ENCODE measurements at regions of chr5 and their contacts with region 1.

Region 1: DNA sequence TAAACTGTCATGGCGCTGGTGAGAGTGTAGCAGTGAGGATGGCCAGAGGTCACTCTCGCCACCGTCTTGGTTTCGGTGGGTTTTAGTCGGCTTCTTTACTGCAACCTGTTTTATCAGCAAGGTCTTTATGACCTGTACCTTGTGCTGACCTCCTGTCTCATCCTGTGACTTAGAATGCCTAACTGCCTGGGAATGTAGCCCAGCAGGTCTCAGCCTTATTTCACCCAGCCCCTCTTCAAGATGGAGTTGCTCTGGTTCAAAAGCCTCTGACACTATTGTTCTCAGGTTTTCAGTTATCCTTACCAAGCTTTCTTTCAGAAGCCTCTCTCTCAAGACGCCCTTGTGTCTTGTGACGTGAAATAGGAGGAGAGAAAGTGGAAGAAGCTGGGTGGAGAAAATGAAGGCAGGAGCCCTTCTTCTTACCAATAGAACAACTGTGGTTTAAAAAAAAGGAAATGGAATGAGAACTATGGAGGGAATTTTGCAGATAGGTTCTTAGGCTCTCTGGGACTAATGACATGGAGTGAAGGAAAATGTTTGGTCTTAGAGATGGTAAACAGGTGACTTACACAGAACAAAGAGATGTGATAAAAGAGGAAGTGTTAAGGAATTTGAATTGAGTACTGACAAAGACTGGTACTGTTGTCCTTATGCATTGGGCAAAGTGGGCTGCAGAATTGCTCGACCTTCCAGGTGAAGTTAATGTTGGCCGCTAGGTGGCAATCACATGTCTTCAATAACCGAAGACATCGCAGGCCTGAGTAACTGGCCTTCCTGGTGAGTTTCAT is 133.3 kb upstream of the RAI14 start:
- DNase-seq: no peak

Region 2: DNA sequence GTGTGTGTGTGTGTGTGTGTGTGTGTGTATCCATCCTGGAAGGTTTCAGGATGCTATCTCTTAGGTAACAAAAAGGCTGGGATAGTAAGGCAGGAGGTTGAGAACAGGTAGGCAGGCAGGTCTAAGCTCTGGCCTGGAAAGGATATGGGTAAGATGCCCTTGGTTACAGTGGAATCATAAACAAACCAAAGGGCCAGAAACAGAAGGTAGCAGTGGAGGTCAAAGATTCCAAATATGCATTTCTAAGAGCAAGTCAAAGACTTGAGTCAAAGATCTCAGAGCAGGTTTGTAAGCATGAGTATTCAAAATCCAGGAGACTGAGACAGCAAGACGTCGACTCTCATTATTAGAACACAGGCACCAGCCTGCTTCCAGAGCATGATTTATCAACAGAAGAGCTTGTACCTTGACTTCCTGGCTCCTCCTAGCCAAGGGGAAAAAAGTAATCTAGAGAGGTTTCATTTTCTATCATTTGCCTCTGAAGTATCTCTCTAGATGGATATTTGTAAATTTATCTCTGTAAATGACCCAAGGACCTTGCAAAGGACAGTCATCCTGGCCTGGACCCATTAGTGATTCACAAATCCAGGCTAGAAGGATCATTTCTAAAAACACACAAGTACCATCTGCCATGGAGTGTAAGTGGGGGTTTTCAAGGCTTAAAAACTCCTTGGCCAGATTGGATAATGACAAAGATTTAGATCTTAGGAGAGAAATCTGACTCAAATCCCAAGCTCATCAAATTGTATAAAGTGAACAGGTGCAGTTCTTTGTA is 324.1 kb after region 1 on chr5:
- intact Hi-C with region 1: no loop called
- DNase-seq: no peak

Region 3: GRCh38 chr5:34898258-34898895 is 375.6 kb after region 1 on chr5:
- intact Hi-C with region 1: loop called (anchors 1 kb)
- DNase-seq: no peak

Measured in cardiac septum (tissue), 1 donor.